ENCODE measurements at regions of chr7 and their contacts with region 1.

Region 1: GRCh38 chr7:137898839-137899721 is 52.3 kb upstream of the DGKI start:
- DNase-seq: peak; percentile 67
- ATAC-seq: peak; percentile 95
- H3K4me3 Mint-ChIP-seq: peak overlapping the region; percentile 75
- H3K27ac Mint-ChIP-seq: peak overlapping the region; percentile 61
- H3K4me1 Mint-ChIP-seq: peaks cover 24% of the 10 kb centered on the region
- H3K27me3 Mint-ChIP-seq: no peaks in the 10 kb centered on the region
- CTCF ChIP-seq: peak; percentile 59

Region 2: GRCh38 chr7:136405931-136406777 is 1492.9 kb before region 1 on chr7:
- CTCF ChIA-PET with region 1: no interaction called
- POLR2A ChIA-PET with region 1: no interaction called
- intact Hi-C with region 1: loop called (anchors 5 kb)
- DNase-seq: no peak
- ATAC-seq: no peak
- H3K4me3 Mint-ChIP-seq: no peak overlapping the region
- H3K27ac Mint-ChIP-seq: no peak overlapping the region
- H3K4me1 Mint-ChIP-seq: peaks cover 7% of the 10 kb centered on the region
- H3K27me3 Mint-ChIP-seq: no peaks in the 10 kb centered on the region
- CTCF ChIP-seq: no peak

Region 3: DNA sequence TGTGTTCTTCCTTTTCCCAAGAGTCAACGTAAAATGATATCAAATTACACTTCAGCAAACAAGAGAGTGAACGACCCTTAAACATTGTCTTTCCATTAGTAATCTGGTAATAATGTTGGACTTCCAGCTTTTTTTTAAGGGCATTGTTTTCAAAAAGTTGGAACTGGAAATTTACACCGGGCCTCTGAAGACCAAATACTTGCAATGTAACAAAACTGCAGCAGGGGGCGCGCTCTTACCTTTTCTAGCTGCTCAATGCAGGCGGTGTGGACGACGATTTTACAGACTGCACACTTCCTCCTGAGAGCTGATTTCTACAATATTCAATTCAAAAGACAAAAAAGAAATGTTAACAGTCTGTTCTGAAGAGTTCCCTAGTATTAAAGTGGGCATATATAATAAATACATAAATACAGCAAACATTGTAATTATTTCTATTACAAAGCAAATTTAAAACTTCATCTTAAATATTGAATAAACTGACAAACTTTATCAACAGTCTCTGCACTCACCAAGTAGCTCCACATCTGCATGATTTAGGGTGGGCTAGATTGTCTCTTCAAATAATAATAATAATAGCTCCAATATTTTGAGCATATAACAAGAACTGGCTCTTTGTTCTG is 242.7 kb before region 1 on chr7:
- CTCF ChIA-PET with region 1: interaction called, 6 read pairs
- POLR2A ChIA-PET with region 1: no interaction called
- intact Hi-C with region 1: loop called (anchors 1 kb)
- DNase-seq: peak; percentile 24
- ATAC-seq: peak; percentile 28
- H3K4me3 Mint-ChIP-seq: no peak overlapping the region
- H3K27ac Mint-ChIP-seq: no peak overlapping the region
- H3K4me1 Mint-ChIP-seq: no peaks in the 10 kb centered on the region
- H3K27me3 Mint-ChIP-seq: peaks cover 2% of the 10 kb centered on the region
- CTCF ChIP-seq: peak; percentile 84

Region 4: DNA sequence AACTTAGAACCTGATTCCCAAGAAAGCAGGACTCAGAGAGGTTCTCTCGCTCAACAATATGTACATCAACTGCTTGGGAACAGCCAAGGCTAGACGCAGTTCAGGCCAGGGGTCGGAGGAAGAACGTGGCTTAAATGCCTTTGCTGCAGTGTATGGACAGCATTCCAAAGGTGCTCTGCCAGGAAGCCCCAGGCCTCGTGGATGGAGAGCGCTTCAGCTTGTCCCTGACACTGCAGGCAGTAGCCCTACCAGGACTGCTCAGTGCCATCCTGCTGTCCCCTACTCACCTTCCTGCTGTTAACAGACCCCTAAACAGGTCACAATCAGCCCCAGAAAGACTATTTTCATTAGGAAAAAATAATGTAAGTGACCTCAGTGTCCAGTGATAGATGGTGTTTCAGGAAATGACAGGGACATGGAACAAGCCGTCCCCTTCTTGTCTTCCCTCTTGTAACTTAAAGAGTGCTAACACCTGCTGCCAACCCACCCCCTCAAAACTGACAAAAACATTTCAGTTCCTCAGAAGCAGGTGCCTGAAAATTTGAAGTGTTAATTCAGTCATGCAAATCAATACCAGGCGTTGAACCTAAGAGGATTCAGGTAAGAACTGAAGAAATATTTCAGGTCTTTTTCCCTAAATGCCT is 86.3 kb after region 1 on chr7:
- CTCF ChIA-PET with region 1: interaction called, 3 read pairs
- POLR2A ChIA-PET with region 1: no interaction called
- intact Hi-C with region 1: loop called (anchors 1 kb)
- DNase-seq: no peak
- ATAC-seq: peak; percentile 75
- H3K4me3 Mint-ChIP-seq: peak overlapping the region; percentile 47
- H3K27ac Mint-ChIP-seq: no peak overlapping the region
- H3K4me1 Mint-ChIP-seq: peaks cover 27% of the 10 kb centered on the region
- H3K27me3 Mint-ChIP-seq: no peaks in the 10 kb centered on the region
- CTCF ChIP-seq: no peak

Region 5: DNA sequence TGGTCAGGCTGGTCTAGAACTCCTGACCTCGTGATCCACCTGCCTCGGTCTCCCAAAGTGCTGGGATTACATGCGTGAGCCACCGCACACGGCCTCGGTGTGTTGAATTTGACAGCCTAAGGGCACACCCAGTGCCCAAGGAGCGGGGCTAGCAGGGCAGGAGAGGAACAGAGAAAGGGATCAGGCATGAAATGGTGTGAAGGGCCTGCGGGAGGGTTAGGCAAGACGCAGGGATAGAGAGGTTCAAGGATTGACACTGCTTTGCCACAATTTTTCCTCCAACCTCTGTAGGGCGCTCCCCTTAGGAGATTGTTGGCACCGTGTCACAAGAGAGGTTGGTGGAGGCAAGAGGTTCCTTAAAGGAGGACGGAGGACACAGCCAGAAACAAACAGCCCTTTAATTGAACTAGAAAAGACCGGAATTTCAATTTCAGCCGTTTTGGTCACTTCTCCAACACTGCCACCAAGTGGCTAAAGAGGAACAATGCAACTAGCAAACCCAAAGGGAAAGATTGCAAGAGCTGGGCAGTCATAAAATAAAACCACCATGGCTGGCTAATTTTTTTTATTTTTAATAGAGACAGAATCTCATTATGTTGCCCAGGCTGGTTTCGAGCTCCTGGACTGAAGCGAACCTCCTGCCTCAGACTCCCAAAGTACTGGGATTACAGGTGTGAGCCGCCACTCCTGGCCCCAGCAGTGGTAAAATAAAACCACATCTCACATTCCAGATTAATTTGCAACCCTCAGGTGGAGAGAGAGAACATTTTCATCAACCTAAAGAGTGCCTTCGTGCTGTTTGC is 109.7 kb after region 1 on chr7:
- CTCF ChIA-PET with region 1: interaction called, 121 read pairs
- POLR2A ChIA-PET with region 1: interaction called, 4 read pairs
- intact Hi-C with region 1: loop called (anchors 1 kb)
- DNase-seq: no peak
- ATAC-seq: peak; percentile 75
- H3K4me3 Mint-ChIP-seq: no peak overlapping the region
- H3K27ac Mint-ChIP-seq: no peak overlapping the region
- H3K4me1 Mint-ChIP-seq: peaks cover 5% of the 10 kb centered on the region
- H3K27me3 Mint-ChIP-seq: no peaks in the 10 kb centered on the region
- CTCF ChIP-seq: peak; percentile 19

Region 6: DNA sequence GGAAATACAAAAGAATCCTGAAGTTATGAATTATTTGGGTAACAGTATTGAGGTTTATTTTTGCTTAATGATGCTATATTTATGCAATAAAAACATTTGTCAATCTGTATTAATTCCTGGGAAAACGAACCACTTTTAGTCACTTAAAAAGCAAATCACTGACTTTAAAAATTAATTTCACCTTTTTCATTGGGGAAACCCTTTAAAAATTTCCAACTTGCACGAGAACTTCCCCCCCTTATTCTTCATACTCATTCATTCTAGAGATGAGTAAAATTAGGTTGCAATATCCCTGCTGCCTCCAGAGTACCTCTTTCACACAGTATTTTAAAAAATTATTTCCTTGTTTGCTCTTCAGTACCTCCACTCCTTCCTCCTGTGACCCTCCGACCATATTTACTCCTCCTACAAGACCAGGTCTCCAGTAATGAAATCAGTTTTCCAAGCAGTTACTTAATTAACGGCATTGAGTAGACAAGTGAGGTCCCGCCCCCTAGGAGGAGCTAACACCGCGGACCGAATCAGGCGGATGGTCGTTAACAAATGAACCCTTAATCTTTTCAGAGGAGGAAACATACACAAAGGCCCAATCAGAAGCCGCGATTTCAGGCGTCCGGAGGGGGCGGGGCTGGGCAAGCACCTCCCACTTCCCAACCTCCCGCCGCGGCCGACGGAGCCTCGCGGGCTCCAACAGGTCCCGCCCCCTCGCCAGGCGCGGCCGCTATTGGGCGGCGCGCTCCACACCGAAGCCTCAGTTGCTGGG is 560.5 kb after region 1 on chr7:
- CTCF ChIA-PET with region 1: no interaction called
- POLR2A ChIA-PET with region 1: no interaction called
- intact Hi-C with region 1: loop called (anchors 2 kb)
- DNase-seq: peak; percentile 96
- ATAC-seq: peak; percentile 88
- H3K4me3 Mint-ChIP-seq: peak overlapping the region; percentile 91
- H3K27ac Mint-ChIP-seq: peak overlapping the region; percentile 86
- H3K4me1 Mint-ChIP-seq: peaks cover 22% of the 10 kb centered on the region
- H3K27me3 Mint-ChIP-seq: no peaks in the 10 kb centered on the region
- CTCF ChIP-seq: no peak

Region 7: DNA sequence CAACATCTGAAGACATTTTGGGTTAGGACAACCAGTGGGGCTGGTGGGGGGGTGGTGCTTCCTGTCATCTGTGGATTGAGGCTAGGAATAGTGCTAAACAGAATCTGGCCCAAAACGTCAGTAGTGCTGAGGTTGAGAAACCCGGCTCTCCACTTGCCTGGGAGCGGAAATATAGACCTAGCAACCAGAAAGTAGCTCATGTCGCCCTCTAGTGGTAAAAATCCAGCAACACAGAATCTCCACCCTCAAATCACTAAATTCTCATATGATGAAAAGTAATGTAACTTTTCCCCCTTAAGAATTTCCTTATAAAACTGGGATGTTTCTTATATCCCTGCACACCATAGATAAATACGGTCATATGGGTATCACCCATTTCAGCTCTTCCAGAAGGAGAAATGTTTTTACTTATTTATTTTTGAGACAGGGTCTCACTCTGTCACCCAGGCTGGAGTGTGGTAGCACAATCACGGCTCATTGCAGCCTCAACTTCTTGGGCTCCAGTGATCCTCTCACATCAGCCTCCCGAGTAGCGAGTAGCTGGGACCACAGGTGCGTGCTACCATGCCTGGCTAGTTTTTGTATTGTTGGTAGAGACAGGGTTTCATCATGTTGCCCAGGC is 1176.1 kb after region 1 on chr7:
- CTCF ChIA-PET with region 1: no interaction called
- POLR2A ChIA-PET with region 1: no interaction called
- intact Hi-C with region 1: loop called (anchors 2 kb)
- DNase-seq: no peak
- ATAC-seq: peak; percentile 87
- H3K4me3 Mint-ChIP-seq: no peak overlapping the region
- H3K27ac Mint-ChIP-seq: peak overlapping the region; percentile 60
- H3K4me1 Mint-ChIP-seq: peaks cover 17% of the 10 kb centered on the region
- H3K27me3 Mint-ChIP-seq: no peaks in the 10 kb centered on the region
- CTCF ChIP-seq: no peak